ENCODE measurements at regions of chr6 and their contacts with region 1.

Region 1: GRCh38 chr6:53544470-53545308 is at the start of gene GCLC:
- DNase-seq: peak; percentile 96
- total RNA-seq, gene GCLC: 33.0 TPM

Region 2: GRCh38 chr6:52995913-52996645 is 548.6 kb before region 1 on chr6:
- intact Hi-C with region 1: loop called (anchors 10 kb)
- DNase-seq: peak; percentile 70

Region 3: DNA sequence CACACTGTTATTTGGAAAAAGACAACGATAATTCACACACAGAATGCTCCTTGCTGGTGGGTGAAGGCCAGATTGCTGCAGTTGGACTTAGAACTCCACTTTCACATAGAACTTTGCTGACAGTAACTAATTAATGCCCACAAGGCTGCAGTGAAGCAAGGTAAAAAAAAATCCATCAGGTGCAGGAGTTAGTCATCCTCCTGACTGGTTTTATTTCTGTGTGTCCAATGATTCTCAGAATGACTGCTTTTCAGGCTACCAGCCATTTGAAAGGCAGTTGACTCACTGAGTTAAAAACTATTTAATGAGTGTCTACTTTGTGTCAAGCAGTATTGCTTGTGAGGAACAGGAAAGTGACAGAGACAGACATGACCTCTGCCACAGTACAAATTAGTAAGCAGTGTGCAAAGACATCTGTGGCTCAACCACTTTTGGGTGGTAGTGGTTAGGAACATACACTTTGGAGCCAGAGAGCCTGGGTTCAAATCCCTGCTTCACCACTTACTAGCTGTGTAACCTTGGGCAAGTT is 237.8 kb before region 1 on chr6:
- intact Hi-C with region 1: no loop called
- DNase-seq: no peak

Region 4: GRCh38 chr6:53492860-53493634 is 51.6 kb before region 1 on chr6:
- intact Hi-C with region 1: loop called (anchors 5 kb)
- DNase-seq: no peak

Region 5: GRCh38 chr6:53651764-53652401 is 107.2 kb after region 1 on chr6:
- intact Hi-C with region 1: loop called (anchors 5 kb)
- DNase-seq: peak; percentile 87

Region 6: GRCh38 chr6:53679446-53679933 is 134.8 kb after region 1 on chr6:
- intact Hi-C with region 1: loop called (anchors 5 kb)
- DNase-seq: no peak

Region 7: DNA sequence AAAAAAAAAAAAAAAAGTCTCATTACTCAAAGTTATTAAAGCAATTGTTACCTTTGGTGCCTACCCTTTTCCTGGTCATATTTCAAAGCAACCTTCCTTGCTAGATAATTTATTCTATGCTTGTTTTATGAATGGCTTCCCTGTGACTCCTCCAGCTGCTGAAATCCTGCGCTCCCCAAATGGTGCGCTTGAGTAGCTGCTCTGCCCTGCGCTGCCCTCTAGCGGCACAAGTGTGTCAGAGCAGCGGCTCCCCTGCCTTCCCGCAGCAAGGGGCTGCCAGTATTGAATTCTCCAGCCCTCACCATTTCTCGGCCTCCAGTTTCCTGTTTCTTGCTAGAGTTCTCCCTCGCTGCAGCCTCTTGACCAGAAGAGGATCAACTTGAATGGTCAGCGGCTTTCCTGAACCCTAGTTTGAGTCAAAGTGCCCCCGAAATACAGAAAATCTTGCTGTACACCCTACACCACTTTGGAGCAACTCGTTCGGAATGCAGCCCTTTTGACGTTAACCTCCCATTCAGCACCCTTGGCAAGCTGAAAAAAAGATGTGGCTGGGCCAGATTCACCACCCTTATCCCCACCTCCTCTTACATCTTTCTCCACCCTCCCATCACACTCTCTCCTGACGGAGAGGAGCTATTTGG is 181.2 kb after region 1 on chr6:
- intact Hi-C with region 1: loop called (anchors 5 kb)
- DNase-seq: peak; percentile 87

Region 8: DNA sequence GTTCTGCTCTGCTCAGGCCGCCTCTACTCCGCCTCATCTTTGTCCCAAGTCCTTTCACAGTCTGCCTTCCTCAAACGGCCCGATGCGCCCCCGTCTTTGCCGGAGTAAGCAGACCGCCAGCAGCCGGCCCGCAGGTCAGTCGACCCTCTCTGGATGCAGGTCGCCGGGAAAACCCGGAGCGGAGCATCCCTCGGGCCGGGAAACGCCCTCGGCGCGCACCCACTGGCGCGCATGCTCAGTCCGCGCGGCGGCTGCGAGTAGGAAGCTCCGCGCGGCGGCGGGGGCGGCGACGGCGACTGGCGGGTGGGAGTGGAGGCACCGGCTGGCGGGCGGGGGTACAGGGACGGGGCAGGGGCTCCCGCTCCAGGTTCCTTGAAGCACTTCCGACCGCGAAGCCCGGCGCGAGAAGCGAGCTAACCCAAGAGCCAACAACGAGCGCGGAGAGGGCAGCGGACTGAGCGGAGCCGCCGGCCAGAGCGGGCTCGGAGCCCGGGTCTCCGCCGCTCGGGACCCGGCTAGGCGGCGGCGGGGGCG is 250.1 kb after region 1 on chr6 and contains the start of gene LRRC1:
- intact Hi-C with region 1: loop called (anchors 10 kb)
- DNase-seq: peak; percentile 96
- total RNA-seq, gene LRRC1: 6.4 TPM